ENCODE measurements at regions of chr11 and their contacts with region 1.

Region 1: GRCh38 chr11:18650859-18651557 is 16.9 kb upstream of the SPTY2D1 start:
- DNase-seq: peak; percentile 37 to 59
- H3K4me3 ChIP-seq: no peak overlapping the region
- H3K27ac ChIP-seq: no peak overlapping the region
- H3K4me1 ChIP-seq: no peaks in the 10 kb centered on the region
- H3K27me3 ChIP-seq: no peaks in the 10 kb centered on the region
- CTCF ChIP-seq: peak; percentile 82

Region 2: DNA sequence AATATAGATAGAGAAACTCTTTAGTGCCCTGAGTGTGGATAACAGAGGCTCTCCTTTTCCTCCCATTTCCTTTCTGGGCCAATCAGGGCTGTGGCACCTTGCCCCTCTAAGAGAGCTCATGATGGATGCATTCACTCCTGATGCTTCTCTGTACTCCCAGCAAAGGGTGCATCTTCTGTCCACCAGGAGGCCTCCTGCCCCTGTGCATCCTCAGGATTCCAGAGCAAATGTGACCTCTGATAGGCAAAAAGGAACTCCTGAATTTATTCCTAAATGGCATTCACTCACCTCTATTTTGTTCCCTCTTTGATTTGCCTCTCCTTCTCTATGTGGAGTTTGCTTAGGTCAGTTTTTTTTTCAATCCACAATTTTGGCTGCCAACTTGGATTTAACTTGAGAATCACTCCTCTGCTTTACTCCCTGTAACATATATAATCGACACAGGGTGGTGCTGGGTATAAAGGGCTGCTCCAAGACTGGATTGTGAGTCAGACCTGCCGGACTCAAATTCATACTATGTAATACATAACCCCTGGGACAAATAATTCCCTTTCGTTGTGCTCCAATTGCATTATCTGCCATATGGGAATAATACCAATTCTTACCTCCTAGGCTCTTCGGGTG is 479.5 kb before region 1 on chr11:
- CTCF ChIA-PET with region 1: no interaction called
- POLR2A ChIA-PET with region 1: no interaction called
- intact Hi-C with region 1: loop called (anchors 1 kb)
- DNase-seq: peak in 1 of 2 experiments; percentile 45
- H3K4me3 ChIP-seq: no peak overlapping the region
- H3K27ac ChIP-seq: no peak overlapping the region
- H3K4me1 ChIP-seq: no peaks in the 10 kb centered on the region
- H3K27me3 ChIP-seq: peaks cover 15% of the 10 kb centered on the region
- CTCF ChIP-seq: peak; percentile 88

Region 3: GRCh38 chr11:18243783-18244362 is 407.1 kb before region 1 on chr11:
- CTCF ChIA-PET with region 1: no interaction called
- POLR2A ChIA-PET with region 1: no interaction called
- intact Hi-C with region 1: loop called (anchors 10 kb)
- DNase-seq: peak; percentile 57 to 66
- H3K4me3 ChIP-seq: no peak overlapping the region
- H3K27ac ChIP-seq: no peak overlapping the region
- H3K4me1 ChIP-seq: peaks cover 6% of the 10 kb centered on the region; the same call in 1 of the 2 replicates
- H3K27me3 ChIP-seq: no peaks in the 10 kb centered on the region
- CTCF ChIP-seq: peak; percentile 97

Region 4: GRCh38 chr11:18721561-18722292 is 70.7 kb after region 1 on chr11:
- CTCF ChIA-PET with region 1: interaction called, 3 read pairs
- POLR2A ChIA-PET with region 1: no interaction called
- intact Hi-C with region 1: loop called (anchors 5 kb)
- DNase-seq: peak; percentile 51 to 54
- H3K4me3 ChIP-seq: peak overlapping the region; percentile 56
- H3K27ac ChIP-seq: no peak overlapping the region
- H3K4me1 ChIP-seq: peaks cover 6% of the 10 kb centered on the region; the same call in 1 of the 2 replicates
- H3K27me3 ChIP-seq: peaks cover 25% of the 10 kb centered on the region
- CTCF ChIP-seq: peak; percentile 88

Region 5: GRCh38 chr11:19703211-19703610 is 1052.2 kb after region 1 on chr11:
- CTCF ChIA-PET with region 1: interaction called, 13 read pairs
- POLR2A ChIA-PET with region 1: no interaction called
- intact Hi-C with region 1: no loop called
- DNase-seq: no peak
- H3K4me3 ChIP-seq: no peak overlapping the region
- H3K27ac ChIP-seq: no peak overlapping the region
- H3K4me1 ChIP-seq: peaks cover 12% of the 10 kb centered on the region
- H3K27me3 ChIP-seq: no peaks in the 10 kb centered on the region
- CTCF ChIP-seq: no peak

Measured in PC-9 (cell line).